ENCODE measurements at regions of chr1 and their contacts with region 1.

Region 1: DNA sequence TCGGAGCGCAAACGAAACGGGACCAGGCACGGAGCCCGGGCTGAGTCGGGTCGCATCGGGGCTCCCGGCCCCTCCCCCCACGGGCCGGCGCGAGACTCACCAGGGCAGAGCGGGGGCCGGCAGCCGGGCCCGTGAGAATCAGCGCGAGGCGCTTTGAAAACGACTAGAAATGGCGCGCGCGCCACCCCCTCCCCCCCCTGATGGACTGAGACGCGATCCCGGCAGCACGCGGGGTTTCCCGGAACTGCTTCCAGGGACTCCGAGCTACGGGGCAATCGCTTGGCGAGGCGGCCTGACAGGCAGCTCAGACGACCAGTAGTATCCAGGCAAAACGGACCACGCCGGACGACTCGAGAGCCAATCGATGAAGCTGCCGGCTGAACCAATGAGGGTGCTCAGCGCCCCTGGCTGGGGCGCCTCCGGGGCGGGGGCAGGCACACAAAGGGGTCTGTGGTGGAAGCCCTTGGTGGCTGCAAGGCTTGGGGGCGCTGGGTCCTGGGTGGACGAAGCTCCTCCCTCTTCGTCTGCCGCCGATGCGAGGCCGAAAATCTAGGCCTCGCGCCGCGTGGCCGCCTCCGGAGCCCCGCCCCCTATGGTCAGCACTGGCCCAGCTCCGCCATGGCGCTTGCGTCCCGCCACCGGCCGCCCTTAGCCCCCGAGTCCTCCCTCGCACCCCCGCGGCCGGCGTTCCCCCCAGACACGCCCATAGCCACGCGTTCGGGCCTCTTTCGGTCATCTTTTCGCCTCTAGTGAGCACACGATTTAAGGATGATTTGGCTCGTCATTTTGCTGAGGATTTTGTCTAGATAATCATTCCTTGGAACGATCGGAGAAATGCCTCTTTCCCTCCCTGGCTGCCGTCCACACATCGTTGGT is at the start of gene HNRNPR:
- DNase-seq: peak; percentile 96 to 100 (median 99)
- ATAC-seq: peak; percentile 97 to 98 (median 98)
- H3K4me3 ChIP-seq: peak within 1 kb of the TSS; percentile 83 to 85
- H3K4me3 Mint-ChIP-seq: peak within 1 kb of the TSS; percentile 93 to 100 (median 97)
- H3K27ac ChIP-seq: peak within 1 kb of the TSS; percentile 65
- H3K27ac Mint-ChIP-seq: peak within 1 kb of the TSS; percentile 89 to 93
- H3K4me1 ChIP-seq: peaks cover 11 to 38% of the 10 kb centered on the region in 2 experiments
- H3K4me1 Mint-ChIP-seq: peaks cover 42 to 47% (median 43%) of the 10 kb centered on the region in 3 donors
- H3K27me3 ChIP-seq: no peaks in the 10 kb centered on the region
- H3K27me3 Mint-ChIP-seq: no peaks in the 10 kb centered on the region
- total RNA-seq, gene HNRNPR: 98.2 to 122 (median 109) TPM

Region 2: DNA sequence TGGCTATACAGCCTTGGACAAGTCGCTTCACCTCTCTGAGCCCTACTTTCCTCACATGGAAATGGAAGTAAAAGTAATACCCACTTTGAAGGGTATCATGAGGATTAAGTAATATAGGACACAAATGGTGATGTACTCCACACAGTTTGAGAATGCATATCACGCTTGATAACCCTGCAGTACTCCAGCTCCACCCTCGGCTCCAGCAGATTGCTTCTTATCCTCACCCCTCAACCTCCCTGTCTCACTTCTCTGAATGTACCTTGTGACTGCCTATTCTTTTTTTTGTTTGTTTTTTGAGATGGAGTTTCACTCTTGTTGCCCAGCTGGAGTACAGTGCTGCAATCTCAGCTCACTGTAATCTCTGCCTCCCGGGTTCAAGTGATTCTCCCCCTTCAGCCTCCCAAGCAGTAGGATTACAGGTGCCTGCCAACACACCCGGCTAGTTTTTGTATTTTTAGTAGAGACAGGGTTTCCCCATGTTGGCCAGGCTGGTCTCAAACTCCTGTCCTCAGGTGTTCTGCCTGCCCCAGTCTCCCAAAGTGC is 1476.8 kb before region 1 on chr1:
- CTCF ChIA-PET with region 1: no interaction called
- POLR2A ChIA-PET with region 1: interaction called in 1 of 2 experiments, 10 read pairs
- DNase-seq: no peak
- ATAC-seq: no peak
- H3K4me3 ChIP-seq: no peak overlapping the region
- H3K4me3 Mint-ChIP-seq: no peak overlapping the region
- H3K27ac ChIP-seq: no peak overlapping the region
- H3K27ac Mint-ChIP-seq: peak overlapping the region in 1 of 2 donors; percentile 49
- H3K4me1 ChIP-seq: no peaks in the 10 kb centered on the region
- H3K4me1 Mint-ChIP-seq: no peaks in the 10 kb centered on the region
- H3K27me3 ChIP-seq: peaks cover 0 to 5% of the 10 kb centered on the region in 2 experiments
- H3K27me3 Mint-ChIP-seq: peaks cover 0 to 1% of the 10 kb centered on the region in 2 donors

Region 3: DNA sequence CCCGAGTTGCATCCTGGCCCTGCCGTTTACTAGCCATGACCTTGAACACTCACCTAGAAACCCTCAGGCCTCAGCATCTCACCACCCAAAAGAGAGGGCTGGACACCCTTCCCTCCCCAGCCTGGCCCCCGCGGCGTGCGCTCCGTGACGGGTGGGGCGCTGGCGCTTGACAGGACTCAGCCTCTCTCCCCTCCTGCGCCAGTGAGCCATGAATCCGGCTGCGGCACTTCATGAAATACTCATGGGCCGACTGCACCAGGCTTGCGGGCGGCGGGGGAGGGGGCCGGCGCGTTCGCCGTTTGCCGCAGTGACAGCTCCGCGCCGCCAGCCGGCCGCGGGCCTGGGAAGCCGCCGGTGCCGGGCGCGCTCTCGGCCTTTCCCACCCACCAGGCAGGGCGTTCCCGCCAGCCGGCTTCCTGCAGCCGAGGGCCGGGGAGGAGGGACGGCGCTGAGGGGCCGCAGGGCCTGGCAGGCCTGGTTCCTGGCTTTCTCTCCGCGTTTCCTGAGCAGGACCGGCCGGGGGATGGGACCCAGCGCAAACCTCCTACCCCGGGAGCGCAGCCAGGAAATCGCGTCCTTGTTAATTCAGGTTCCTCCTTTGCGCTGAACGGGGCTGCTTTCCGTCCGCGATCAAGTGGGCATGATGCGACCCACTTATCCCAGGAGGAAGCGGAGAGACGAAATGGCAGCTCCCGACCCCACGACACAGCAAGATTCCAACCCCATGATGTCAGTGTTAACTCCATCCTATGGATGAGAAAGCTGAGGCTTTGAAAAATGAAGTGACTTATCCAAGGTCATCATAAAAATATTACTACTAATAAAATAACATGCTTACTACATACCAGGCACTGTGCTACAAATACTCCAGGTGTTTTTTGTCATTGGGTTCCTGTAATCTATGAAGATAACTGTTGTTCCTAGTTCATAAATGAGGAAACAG is 166.6 kb before region 1 on chr1:
- CTCF ChIA-PET with region 1: no interaction called
- POLR2A ChIA-PET with region 1: no interaction called
- DNase-seq: peak in 25 of 35 experiments; percentile 13 to 61 (median 34)
- ATAC-seq: peak; percentile 77 to 84 (median 82)
- H3K4me3 ChIP-seq: peak overlapping the region; percentile 49 to 58
- H3K4me3 Mint-ChIP-seq: peak overlapping the region; percentile 66 to 80 (median 68)
- H3K27ac ChIP-seq: no peak overlapping the region
- H3K27ac Mint-ChIP-seq: no peak overlapping the region
- H3K4me1 ChIP-seq: peaks cover 2 to 11% of the 10 kb centered on the region in 2 experiments
- H3K4me1 Mint-ChIP-seq: peaks cover 8 to 16% (median 13%) of the 10 kb centered on the region in 3 donors
- H3K27me3 ChIP-seq: peaks cover 0 to 14% of the 10 kb centered on the region in 2 experiments
- H3K27me3 Mint-ChIP-seq: peaks cover 3 to 9% of the 10 kb centered on the region in 2 donors

Region 4: DNA sequence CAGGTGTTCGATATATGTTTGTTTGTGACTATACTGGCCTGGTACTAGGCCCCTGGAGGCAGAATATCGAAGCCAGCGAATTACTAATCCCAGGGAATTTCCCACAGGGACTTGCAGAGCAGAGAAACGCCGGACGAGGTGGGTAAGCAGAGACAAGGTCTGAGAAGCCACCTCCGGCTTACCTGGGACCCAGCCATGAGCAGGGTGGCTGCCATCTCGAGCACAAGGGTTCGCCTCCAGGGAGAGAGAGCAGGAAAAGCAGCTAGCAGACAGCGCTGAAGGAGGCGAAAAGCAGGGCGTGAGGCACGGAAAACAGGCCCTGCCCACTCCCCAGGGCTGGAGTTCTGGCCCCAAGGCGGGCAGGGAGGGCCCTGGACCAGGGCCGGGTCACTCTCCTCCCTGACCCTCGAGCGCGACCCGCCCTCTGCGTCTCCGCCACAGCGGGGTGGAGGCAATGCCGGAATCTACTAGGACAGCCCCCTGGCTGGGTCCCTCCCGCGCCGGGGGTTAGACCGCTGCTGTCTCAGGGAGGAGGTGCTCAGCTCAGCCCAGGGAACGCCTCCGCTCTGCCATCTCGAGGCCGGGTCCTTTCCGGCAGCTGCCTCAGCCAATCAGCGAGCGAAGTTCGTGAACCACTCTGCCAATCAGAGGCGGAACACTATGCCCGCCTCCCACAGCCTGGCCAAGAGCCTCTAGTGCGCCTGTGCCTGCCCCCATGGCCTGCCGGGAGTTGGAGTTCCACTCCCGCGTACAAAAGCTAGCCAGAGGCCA is 23.6 kb after region 1 on chr1:
- CTCF ChIA-PET with region 1: interaction called, 3 to 17 read pairs
- POLR2A ChIA-PET with region 1: interaction called, 5 to 9 read pairs
- DNase-seq: peak; percentile 89 to 99 (median 98)
- ATAC-seq: peak; percentile 90 to 92 (median 92)
- H3K4me3 ChIP-seq: peak overlapping the region; percentile 95 to 99
- H3K4me3 Mint-ChIP-seq: peak overlapping the region; percentile 94 to 99 (median 97)
- H3K27ac ChIP-seq: peak overlapping the region; percentile 90
- H3K27ac Mint-ChIP-seq: peak overlapping the region; percentile 98 to 99
- H3K4me1 ChIP-seq: peaks cover 12 to 22% of the 10 kb centered on the region in 2 experiments
- H3K4me1 Mint-ChIP-seq: peaks cover 30 to 40% (median 35%) of the 10 kb centered on the region in 3 donors
- H3K27me3 ChIP-seq: no peaks in the 10 kb centered on the region
- H3K27me3 Mint-ChIP-seq: no peaks in the 10 kb centered on the region